ENCODE measurements at regions of chr7 and their contacts with region 1.

Region 1: GRCh38 chr7:108497082-108497725 is 28.7 kb downstream of the PNPLA8 start:
- DNase-seq: no peak
- H3K4me3 ChIP-seq: no peak overlapping the region
- H3K27ac ChIP-seq: no peak overlapping the region
- H3K4me1 ChIP-seq: no peaks in the 10 kb centered on the region
- H3K27me3 ChIP-seq: no peaks in the 10 kb centered on the region
- CTCF ChIP-seq: peak; percentile 43 to 79 (median 68)
- POLR2A ChIP-seq: no peak

Region 2: DNA sequence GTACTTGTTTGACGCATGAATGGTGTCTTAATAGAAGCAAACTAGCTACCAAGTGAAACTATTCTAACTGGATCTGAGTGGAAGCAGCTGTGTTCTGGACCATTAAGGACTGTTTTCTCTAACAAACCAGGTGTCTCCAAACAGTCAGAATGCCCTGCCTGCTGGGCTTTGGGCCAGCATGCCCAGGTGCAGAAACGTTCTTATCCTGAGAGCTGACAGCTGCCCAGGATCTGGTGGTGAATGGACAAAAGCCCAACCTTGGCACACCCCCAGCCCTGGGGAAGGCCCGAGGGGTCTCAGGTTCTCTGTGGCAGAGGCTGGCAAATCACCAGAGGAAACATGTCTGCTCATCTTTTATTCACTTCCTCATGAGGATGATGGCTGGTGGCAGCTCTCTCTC is 318.8 kb before region 1 on chr7:
- intact Hi-C with region 1: loop called (anchors 5 kb)
- DNase-seq: no peak
- H3K4me3 ChIP-seq: no peak overlapping the region
- H3K27ac ChIP-seq: no peak overlapping the region
- H3K4me1 ChIP-seq: no peaks in the 10 kb centered on the region
- H3K27me3 ChIP-seq: no peaks in the 10 kb centered on the region
- CTCF ChIP-seq: no peak
- POLR2A ChIP-seq: no peak

Region 3: GRCh38 chr7:108908456-108908855 is 411.3 kb after region 1 on chr7:
- intact Hi-C with region 1: no loop called
- DNase-seq: no peak
- H3K4me3 ChIP-seq: no peak overlapping the region
- H3K27ac ChIP-seq: no peak overlapping the region
- H3K4me1 ChIP-seq: no peaks in the 10 kb centered on the region
- H3K27me3 ChIP-seq: no peaks in the 10 kb centered on the region
- CTCF ChIP-seq: no peak
- POLR2A ChIP-seq: no peak